ENCODE measurements at regions of chr19 and their contacts with region 1.

Region 1: GRCh38 chr19:11374433-11375142 is at the start of gene SWSAP1:
- DNase-seq: peak; percentile 99 to 100 (median 99)
- H3K4me3 ChIP-seq: peak within 1 kb of the TSS; percentile 50 to 93 (median 73)
- H3K4me3 Mint-ChIP-seq: peak within 1 kb of the TSS in 1 of 2 donors; percentile 41
- H3K27ac ChIP-seq: peak within 1 kb of the TSS; percentile 85 to 91
- H3K27ac Mint-ChIP-seq: peak within 1 kb of the TSS in 3 of 7 donors; percentile 5 to 53 (median 44)
- H3K4me1 ChIP-seq: peaks cover 46 to 60% of the 10 kb centered on the region in 2 donors
- H3K4me1 Mint-ChIP-seq: peaks cover 12% of the 10 kb centered on the region
- H3K27me3 ChIP-seq: no peaks in the 10 kb centered on the region
- H3K27me3 Mint-ChIP-seq: peaks cover 0 to 4% (median 2%) of the 10 kb centered on the region in 3 donors
- CTCF ChIP-seq: no peak
- polyA plus RNA-seq, gene SWSAP1: 5.9 to 11.5 (median 8.7) TPM

Region 2: DNA sequence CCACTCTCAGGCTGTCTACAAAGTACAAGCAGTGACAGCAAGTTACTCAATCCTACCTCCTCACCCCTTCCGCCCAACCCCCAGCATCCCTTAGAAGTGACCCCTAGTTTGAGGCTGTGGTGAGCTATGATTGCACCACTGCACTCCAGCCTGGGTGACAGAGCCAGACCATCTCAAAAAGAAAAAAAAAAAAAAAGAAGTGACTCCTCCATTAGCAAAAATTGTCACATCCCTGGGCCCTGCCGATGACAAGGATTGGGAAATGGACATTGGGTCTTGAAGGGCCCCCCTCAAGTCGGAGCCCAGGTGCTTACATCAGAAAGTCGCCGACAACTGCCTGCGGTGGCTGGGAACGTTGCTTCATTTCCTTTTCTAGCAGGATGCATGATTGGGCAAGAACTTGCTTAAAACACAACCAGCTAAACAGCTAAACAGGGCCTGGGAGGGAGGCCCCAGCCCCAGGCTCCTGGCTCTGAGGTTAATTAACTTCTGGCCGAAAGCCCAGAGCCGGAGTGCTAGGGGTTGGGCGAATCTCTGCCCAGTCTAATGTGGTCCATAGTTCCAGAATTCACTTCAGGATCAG is 50.4 kb before region 1 on chr19:
- intact Hi-C with region 1: loop called in 1 of 2 experiments (anchors 2 kb)
- DNase-seq: peak; percentile 97 to 99 (median 99)
- H3K4me3 ChIP-seq: peak overlapping the region in 2 of 3 experiments; percentile 15 to 77
- H3K4me3 Mint-ChIP-seq: peak overlapping the region; percentile 64 to 83
- H3K27ac ChIP-seq: peak overlapping the region; percentile 94 to 97
- H3K27ac Mint-ChIP-seq: peak overlapping the region; percentile 91 to 99 (median 99)
- H3K4me1 ChIP-seq: peaks cover 72 to 80% of the 10 kb centered on the region in 2 donors
- H3K4me1 Mint-ChIP-seq: peaks cover 77% of the 10 kb centered on the region
- H3K27me3 ChIP-seq: no peaks in the 10 kb centered on the region
- H3K27me3 Mint-ChIP-seq: peaks cover 0 to 4% (median 0%) of the 10 kb centered on the region in 3 donors
- CTCF ChIP-seq: no peak

Region 3: DNA sequence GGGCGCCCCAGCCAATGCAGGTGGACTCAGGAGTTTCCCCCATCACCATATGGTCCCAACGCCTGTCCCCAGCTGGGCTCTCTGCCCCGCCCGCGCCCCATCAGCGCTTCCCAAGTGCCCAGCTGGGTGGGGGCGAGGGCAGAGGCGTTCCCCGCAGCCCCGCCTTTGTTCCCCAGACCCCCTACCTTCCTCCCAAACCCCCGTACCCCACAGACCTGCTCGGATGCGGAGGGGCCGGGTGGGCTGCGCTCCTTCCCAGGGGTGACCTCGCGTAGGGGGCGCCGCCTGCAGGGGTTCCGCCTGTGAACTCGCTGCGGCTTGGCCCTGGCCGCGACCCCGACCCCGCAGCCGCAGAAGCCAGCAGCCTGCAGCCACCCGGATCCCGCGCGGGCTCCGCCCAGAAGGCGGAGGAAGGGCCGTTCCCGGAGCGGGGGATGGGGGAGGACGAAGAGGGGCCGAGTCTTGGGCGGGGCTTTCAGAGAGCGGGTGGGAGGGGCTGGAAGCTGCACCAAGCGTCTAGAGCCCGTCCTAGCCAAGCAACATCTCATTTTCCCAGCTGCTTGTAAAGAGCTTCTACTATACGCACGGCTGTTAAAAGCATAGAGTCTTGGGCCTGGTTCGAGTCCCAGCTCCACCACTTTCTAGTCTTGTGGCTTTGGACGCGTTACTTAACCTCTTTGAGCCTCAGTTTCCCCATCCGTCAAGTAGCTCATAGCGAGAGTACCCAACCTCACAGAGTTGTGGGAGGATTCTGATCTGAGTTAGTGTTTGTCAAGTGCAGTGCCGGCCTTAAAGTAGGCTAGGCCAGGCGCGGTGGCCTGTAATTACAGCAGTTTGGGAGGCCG is 35.1 kb before region 1 on chr19 and contains the start of gene RAB3D:
- intact Hi-C with region 1: loop called in 1 of 2 experiments (anchors 5 kb)
- DNase-seq: peak; percentile 74 to 88 (median 80)
- H3K4me3 ChIP-seq: peak within 1 kb of the TSS; percentile 66 to 99 (median 98)
- H3K4me3 Mint-ChIP-seq: peak within 1 kb of the TSS; percentile 91 to 99
- H3K27ac ChIP-seq: peak within 1 kb of the TSS; percentile 54 to 85
- H3K27ac Mint-ChIP-seq: peak within 1 kb of the TSS; percentile 85 to 97 (median 91)
- H3K4me1 ChIP-seq: peaks cover 50 to 64% of the 10 kb centered on the region in 2 donors
- H3K4me1 Mint-ChIP-seq: peaks cover 40% of the 10 kb centered on the region
- H3K27me3 ChIP-seq: no peaks in the 10 kb centered on the region
- H3K27me3 Mint-ChIP-seq: peaks cover 0 to 2% (median 0%) of the 10 kb centered on the region in 3 donors
- CTCF ChIP-seq: no peak
- polyA plus RNA-seq, gene RAB3D: 52.9 to 78.1 (median 60.8) TPM

Region 4: GRCh38 chr19:11346092-11346940 is 28.3 kb before region 1 on chr19 and contains the starts of genes CCDC159 and TMEM205:
- intact Hi-C with region 1: loop called (anchors 1 to 2 kb)
- DNase-seq: peak; percentile 98 to 100 (median 99)
- H3K4me3 ChIP-seq: peak within 1 kb of the TSS; percentile 80 to 91 (median 85)
- H3K4me3 Mint-ChIP-seq: peak within 1 kb of the TSS; percentile 92 to 97
- H3K27ac ChIP-seq: peak within 1 kb of the TSS; percentile 91 to 98
- H3K27ac Mint-ChIP-seq: peak within 1 kb of the TSS; percentile 97 to 99 (median 98)
- H3K4me1 ChIP-seq: peaks cover 34 to 49% of the 10 kb centered on the region in 2 donors
- H3K4me1 Mint-ChIP-seq: peaks cover 38% of the 10 kb centered on the region
- H3K27me3 ChIP-seq: no peaks in the 10 kb centered on the region
- H3K27me3 Mint-ChIP-seq: peaks cover 0 to 2% (median 0%) of the 10 kb centered on the region in 3 donors
- CTCF ChIP-seq: no peak
- polyA plus RNA-seq, gene CCDC159: 37.1 to 374 (median 38.3) TPM
- polyA plus RNA-seq, gene TMEM205: 252 to 335 (median 263) TPM

Region 5: GRCh38 chr19:11421607-11422098 is 47.1 kb after region 1 on chr19:
- intact Hi-C with region 1: no loop called
- DNase-seq: peak in 1 of 3 donors; percentile 24
- H3K4me3 ChIP-seq: peak overlapping the region; percentile 3 to 82 (median 54)
- H3K4me3 Mint-ChIP-seq: peak overlapping the region; percentile 84 to 94
- H3K27ac ChIP-seq: no peak overlapping the region
- H3K27ac Mint-ChIP-seq: peak overlapping the region in 3 of 7 donors; percentile 2 to 63 (median 33)
- H3K4me1 ChIP-seq: peaks cover 37 to 47% of the 10 kb centered on the region in 2 donors
- H3K4me1 Mint-ChIP-seq: peaks cover 43% of the 10 kb centered on the region
- H3K27me3 ChIP-seq: peaks cover 39 to 72% of the 10 kb centered on the region in 2 donors
- H3K27me3 Mint-ChIP-seq: peaks cover 68 to 80% (median 74%) of the 10 kb centered on the region in 3 donors
- CTCF ChIP-seq: no peak

Region 6: GRCh38 chr19:11612816-11613511 is 238.4 kb after region 1 on chr19:
- intact Hi-C with region 1: no loop called
- DNase-seq: no peak
- H3K4me3 ChIP-seq: no peak overlapping the region
- H3K4me3 Mint-ChIP-seq: no peak overlapping the region
- H3K27ac ChIP-seq: no peak overlapping the region
- H3K27ac Mint-ChIP-seq: peak overlapping the region in 1 of 7 donors; percentile 10
- H3K4me1 ChIP-seq: no peaks in the 10 kb centered on the region
- H3K4me1 Mint-ChIP-seq: no peaks in the 10 kb centered on the region
- H3K27me3 ChIP-seq: no peaks in the 10 kb centered on the region
- H3K27me3 Mint-ChIP-seq: peaks cover 0 to 2% (median 0%) of the 10 kb centered on the region in 3 donors
- CTCF ChIP-seq: no peak

Measured in CD14-positive monocyte (primary cell).